Activated CD4-positive, alpha-beta memory T cell treated with anti-CD3 and anti-CD28 coated beads for 36 hours (primary cell): ENCODE measurements at regions of chr2 and their contacts with region 1.

Region 1: DNA sequence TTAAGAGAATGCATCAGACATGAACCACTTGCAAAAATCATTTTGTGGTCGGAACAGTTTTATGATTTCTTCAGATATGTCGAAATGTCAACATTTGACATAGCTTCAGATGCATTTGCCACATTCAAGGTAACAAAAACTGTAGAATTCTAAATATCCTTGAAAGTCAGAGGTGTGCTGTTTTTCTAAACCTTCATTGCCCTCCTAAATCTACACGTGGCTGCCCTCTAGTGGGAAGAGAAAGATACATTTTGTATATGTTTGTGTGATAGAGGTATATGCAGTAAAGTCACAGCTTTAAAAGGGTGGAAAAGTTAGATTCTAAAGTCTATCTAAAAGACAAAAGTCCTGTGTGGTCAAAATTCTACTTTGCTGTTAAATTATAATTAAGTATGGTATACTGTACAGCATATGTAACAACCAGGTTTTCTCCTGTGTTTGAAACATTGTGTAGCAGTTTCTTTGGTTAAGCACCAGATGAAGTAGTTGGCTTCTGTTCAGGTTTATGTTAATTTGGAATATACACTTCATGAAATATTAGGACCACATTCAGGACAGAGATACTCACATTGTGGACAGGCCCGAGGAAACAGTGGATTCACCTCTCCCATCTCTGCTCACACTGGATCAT is 65.9 kb upstream of the ITM2C start:
- DNase-seq: peak; percentile 36
- H3K4me3 Mint-ChIP-seq: no peak overlapping the region
- H3K27ac Mint-ChIP-seq: peak overlapping the region; percentile 64
- H3K4me1 Mint-ChIP-seq: peaks cover 16% of the 10 kb centered on the region
- H3K27me3 Mint-ChIP-seq: no peaks in the 10 kb centered on the region

Region 2: GRCh38 chr2:230219419-230220331 is 579.2 kb before region 1 on chr2 and contains the start of gene SP110:
- CTCF ChIA-PET with region 1: no interaction called
- POLR2A ChIA-PET with region 1: no interaction called
- intact Hi-C with region 1: loop called (anchors 10 kb)
- DNase-seq: peak; percentile 90
- H3K4me3 Mint-ChIP-seq: peak within 1 kb of the TSS; percentile 92
- H3K27ac Mint-ChIP-seq: peak within 1 kb of the TSS; percentile 90
- H3K4me1 Mint-ChIP-seq: peaks cover 69% of the 10 kb centered on the region
- H3K27me3 Mint-ChIP-seq: no peaks in the 10 kb centered on the region
- total RNA-seq, gene SP110: 91.5 to 94.1 TPM

Region 3: DNA sequence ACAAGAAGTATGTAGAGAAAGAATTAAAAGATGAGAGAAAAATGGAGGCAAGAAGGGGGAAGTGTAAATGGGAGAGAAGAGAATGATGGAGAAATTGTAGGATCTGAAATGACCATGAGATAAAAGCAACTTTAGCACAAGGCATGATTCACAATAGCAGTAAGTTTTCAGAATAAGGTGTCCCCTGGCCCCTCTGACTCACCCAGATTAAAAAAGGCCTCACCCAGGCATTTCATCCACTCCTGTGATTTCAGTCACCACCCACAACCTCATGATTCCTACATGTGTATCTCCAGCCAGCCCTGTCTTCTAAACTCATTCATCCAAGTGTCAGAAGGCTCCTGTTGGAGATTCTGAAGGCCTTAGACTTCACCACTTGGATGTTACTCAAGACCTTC is 326.3 kb before region 1 on chr2:
- CTCF ChIA-PET with region 1: interaction called, 3 read pairs
- POLR2A ChIA-PET with region 1: no interaction called
- intact Hi-C with region 1: loop called (anchors 10 kb)
- DNase-seq: peak; percentile 76
- H3K4me3 Mint-ChIP-seq: no peak overlapping the region
- H3K27ac Mint-ChIP-seq: peak overlapping the region; percentile 73
- H3K4me1 Mint-ChIP-seq: peaks cover 32% of the 10 kb centered on the region
- H3K27me3 Mint-ChIP-seq: no peaks in the 10 kb centered on the region

Region 4: GRCh38 chr2:230541934-230542380 is 256.9 kb before region 1 on chr2:
- CTCF ChIA-PET with region 1: no interaction called
- POLR2A ChIA-PET with region 1: no interaction called
- intact Hi-C with region 1: no loop called
- DNase-seq: no peak
- H3K4me3 Mint-ChIP-seq: no peak overlapping the region
- H3K27ac Mint-ChIP-seq: no peak overlapping the region
- H3K4me1 Mint-ChIP-seq: peaks cover 25% of the 10 kb centered on the region
- H3K27me3 Mint-ChIP-seq: no peaks in the 10 kb centered on the region

Region 5: DNA sequence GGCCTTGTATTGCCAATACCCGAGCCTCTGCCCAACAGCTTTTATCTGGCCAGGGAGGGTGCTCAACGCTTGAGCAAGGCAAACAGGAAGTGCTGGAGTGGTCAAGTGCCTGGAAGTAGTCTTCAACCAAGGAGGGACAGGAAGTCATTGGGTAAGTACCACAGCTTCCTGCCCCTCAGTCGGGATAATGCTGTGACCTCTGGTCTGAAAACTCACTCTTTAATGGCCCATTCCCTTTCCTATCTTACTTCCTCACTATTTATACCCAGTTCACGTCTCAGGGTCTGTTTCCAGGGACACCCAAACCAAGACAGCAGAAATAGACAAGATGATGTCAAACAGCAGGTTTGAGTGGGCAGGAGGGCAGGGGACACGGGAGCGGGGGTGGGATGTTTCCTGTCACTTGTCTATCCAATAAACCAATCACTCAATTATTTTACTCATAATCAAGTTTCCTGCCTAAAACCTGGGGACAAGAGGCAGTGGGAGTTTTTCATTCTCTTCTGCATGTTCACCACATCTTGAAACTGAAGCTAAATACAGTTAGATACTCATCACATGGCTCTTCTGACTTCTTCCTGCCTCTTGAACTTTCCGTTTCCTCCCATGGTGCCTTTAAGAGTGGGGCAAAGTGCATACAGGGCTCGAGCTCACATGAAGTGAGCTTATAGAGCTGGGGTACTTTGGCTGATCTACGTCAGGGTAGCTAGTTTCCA is 155.2 kb before region 1 on chr2:
- CTCF ChIA-PET with region 1: interaction called, 4 read pairs
- POLR2A ChIA-PET with region 1: interaction called, 6 read pairs
- intact Hi-C with region 1: loop called (anchors 5 kb)
- DNase-seq: peak; percentile 86
- H3K4me3 Mint-ChIP-seq: peak overlapping the region; percentile 49
- H3K27ac Mint-ChIP-seq: peak overlapping the region; percentile 98
- H3K4me1 Mint-ChIP-seq: peaks cover 29% of the 10 kb centered on the region
- H3K27me3 Mint-ChIP-seq: no peaks in the 10 kb centered on the region

Region 6: DNA sequence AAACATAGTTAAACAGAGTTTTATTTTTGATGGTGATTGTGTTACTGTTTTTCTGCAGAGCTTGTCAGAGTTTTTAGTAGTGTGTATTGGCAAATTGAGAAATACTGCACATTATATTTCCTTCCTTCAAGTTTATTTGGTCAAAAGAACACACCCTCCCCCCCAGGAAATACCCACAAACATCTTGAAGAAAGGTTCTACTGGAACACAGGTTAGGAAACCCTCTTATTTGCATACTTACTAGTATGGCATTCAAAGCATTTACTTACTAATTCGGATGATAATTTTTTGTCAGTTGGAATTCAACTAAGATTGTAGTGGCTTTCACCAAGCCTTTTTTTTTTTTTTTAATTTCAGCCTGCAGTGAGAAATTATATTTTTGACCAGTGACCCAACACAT is 77.2 kb before region 1 on chr2:
- CTCF ChIA-PET with region 1: interaction called, 10 read pairs
- POLR2A ChIA-PET with region 1: no interaction called
- intact Hi-C with region 1: no loop called
- DNase-seq: no peak
- H3K4me3 Mint-ChIP-seq: no peak overlapping the region
- H3K27ac Mint-ChIP-seq: peak overlapping the region; percentile 79
- H3K4me1 Mint-ChIP-seq: peaks cover 89% of the 10 kb centered on the region
- H3K27me3 Mint-ChIP-seq: no peaks in the 10 kb centered on the region

Region 7: GRCh38 chr2:230774348-230774951 is 24.4 kb before region 1 on chr2:
- CTCF ChIA-PET with region 1: interaction called, 12 read pairs
- POLR2A ChIA-PET with region 1: interaction called, 4 read pairs
- intact Hi-C with region 1: no loop called
- DNase-seq: no peak
- H3K4me3 Mint-ChIP-seq: no peak overlapping the region
- H3K27ac Mint-ChIP-seq: peak overlapping the region; percentile 33
- H3K4me1 Mint-ChIP-seq: peaks cover 87% of the 10 kb centered on the region
- H3K27me3 Mint-ChIP-seq: no peaks in the 10 kb centered on the region

Region 8: GRCh38 chr2:231321556-231322334 is 522.9 kb after region 1 on chr2:
- CTCF ChIA-PET with region 1: no interaction called
- POLR2A ChIA-PET with region 1: no interaction called
- intact Hi-C with region 1: no loop called
- DNase-seq: no peak
- H3K4me3 Mint-ChIP-seq: no peak overlapping the region
- H3K27ac Mint-ChIP-seq: no peak overlapping the region
- H3K4me1 Mint-ChIP-seq: peaks cover 3% of the 10 kb centered on the region
- H3K27me3 Mint-ChIP-seq: peaks cover 20% of the 10 kb centered on the region